Naive thymus-derived CD4-positive, alpha-beta T cell (primary cell): ENCODE measurements at regions of chr12 and their contacts with region 1.

Region 1: GRCh38 chr12:29380536-29381523 is at the start of gene ERGIC2:
- DNase-seq: peak; percentile 63 to 97 (median 95)
- ATAC-seq: peak; percentile 97
- H3K4me3 ChIP-seq: peak within 1 kb of the TSS; percentile 98
- H3K4me3 Mint-ChIP-seq: peak within 1 kb of the TSS; percentile 88 to 97 (median 94)
- H3K27ac ChIP-seq: peak within 1 kb of the TSS; percentile 91
- H3K27ac Mint-ChIP-seq: peak within 1 kb of the TSS; percentile 92 to 98 (median 96)
- H3K4me1 ChIP-seq: peaks cover 9 to 12% of the 10 kb centered on the region in 2 donors
- H3K4me1 Mint-ChIP-seq: peaks cover 20 to 63% (median 46%) of the 10 kb centered on the region in 7 donors
- H3K27me3 ChIP-seq: no peaks in the 10 kb centered on the region
- H3K27me3 Mint-ChIP-seq: no peaks in the 10 kb centered on the region
- total RNA-seq, gene ERGIC2: 36.0 to 85.7 (median 78.6) TPM

Region 2: GRCh38 chr12:29148911-29149690 is 231.7 kb before region 1 on chr12 and contains the start of gene FAR2:
- CTCF ChIA-PET with region 1: no interaction called
- POLR2A ChIA-PET with region 1: no interaction called
- intact Hi-C with region 1: loop called (anchors 2 to 5 kb)
- DNase-seq: peak; percentile 20 to 58 (median 33)
- ATAC-seq: peak; percentile 78
- H3K4me3 ChIP-seq: peak within 1 kb of the TSS; percentile 88
- H3K4me3 Mint-ChIP-seq: peak within 1 kb of the TSS; percentile 87 to 96 (median 92)
- H3K27ac ChIP-seq: peak within 1 kb of the TSS; percentile 37
- H3K27ac Mint-ChIP-seq: peak within 1 kb of the TSS; percentile 36 to 94 (median 74)
- H3K4me1 ChIP-seq: peaks cover 0 to 6% of the 10 kb centered on the region in 2 donors
- H3K4me1 Mint-ChIP-seq: peaks cover 14 to 31% (median 27%) of the 10 kb centered on the region in 7 donors
- H3K27me3 ChIP-seq: no peaks in the 10 kb centered on the region
- H3K27me3 Mint-ChIP-seq: peaks cover 0 to 64% (median 10%) of the 10 kb centered on the region in 5 donors
- total RNA-seq, gene FAR2: 1.1 to 11.1 (median 3.0) TPM

Region 3: DNA sequence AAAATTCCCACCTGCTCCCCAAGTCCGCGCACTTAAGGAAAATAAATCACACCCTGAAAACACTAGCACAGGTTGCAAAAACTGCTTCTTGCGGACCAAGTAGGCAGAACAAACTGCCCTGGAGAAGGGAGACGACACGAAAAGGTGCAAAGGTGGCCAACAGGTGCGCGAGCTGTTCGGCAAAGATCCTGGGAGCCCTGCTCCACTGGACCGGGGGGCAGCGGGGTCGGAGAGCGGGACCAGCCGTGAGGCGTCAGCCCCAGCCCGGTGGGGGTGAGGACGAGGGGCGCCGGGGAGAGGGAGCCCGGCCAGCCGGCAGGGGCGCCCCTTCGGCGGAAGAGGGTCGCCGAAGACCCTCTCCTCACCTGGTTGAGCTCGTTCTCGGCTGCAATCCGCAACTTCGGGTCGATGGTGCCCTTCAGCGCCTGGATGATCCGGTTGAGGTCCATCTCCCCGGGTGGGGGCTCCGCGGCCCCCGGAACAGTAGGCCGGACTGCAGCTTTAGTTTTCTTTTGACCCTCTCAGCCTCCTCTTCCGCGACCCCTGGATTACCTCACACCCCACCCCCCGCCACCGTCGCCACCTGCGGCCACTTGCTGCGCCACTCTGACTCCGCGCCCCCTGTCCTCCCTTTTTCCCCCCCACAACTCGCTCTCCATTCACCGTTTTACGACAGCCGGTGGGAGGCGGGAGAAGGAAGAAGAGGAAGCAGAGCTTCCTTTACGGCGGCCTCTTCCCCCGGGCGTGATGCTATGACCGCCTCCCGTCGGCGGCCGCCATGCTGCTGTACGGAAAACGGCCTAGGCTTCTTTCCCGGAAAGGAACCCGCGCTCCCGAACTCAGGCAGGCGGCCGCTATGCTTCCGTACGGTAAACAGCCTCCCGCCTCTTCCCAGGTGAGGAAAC is 1314.6 kb after region 1 on chr12 and contains the start of gene IPO8:
- CTCF ChIA-PET with region 1: no interaction called
- POLR2A ChIA-PET with region 1: interaction called, 3 read pairs
- intact Hi-C with region 1: loop called (anchors 1 kb)
- DNase-seq: peak; percentile 61 to 83 (median 76)
- ATAC-seq: peak; percentile 97
- H3K4me3 ChIP-seq: peak within 1 kb of the TSS; percentile 94
- H3K4me3 Mint-ChIP-seq: peak within 1 kb of the TSS; percentile 93 to 100 (median 96)
- H3K27ac ChIP-seq: peak within 1 kb of the TSS; percentile 78
- H3K27ac Mint-ChIP-seq: peak within 1 kb of the TSS; percentile 91 to 98 (median 94)
- H3K4me1 ChIP-seq: peaks cover 22 to 28% of the 10 kb centered on the region in 2 donors
- H3K4me1 Mint-ChIP-seq: peaks cover 27 to 52% (median 45%) of the 10 kb centered on the region in 7 donors
- H3K27me3 ChIP-seq: no peaks in the 10 kb centered on the region
- H3K27me3 Mint-ChIP-seq: peaks cover 0 to 6% (median 4%) of the 10 kb centered on the region in 5 donors
- total RNA-seq, gene IPO8: 30.4 to 59.2 (median 44.4) TPM